ENCODE measurements at regions of chr14 and their contacts with region 1.

Region 1: GRCh38 chr14:54347997-54348611 is 48.7 kb upstream of the CDKN3 start:
- DNase-seq: no peak
- H3K4me3 ChIP-seq: no peak overlapping the region
- CTCF ChIP-seq: peak; percentile 51

Region 2: GRCh38 chr14:53306267-53306721 is 1041.8 kb before region 1 on chr14:
- CTCF ChIA-PET with region 1: interaction called, 43 read pairs
- POLR2A ChIA-PET with region 1: no interaction called
- DNase-seq: no peak
- H3K4me3 ChIP-seq: peak overlapping the region; percentile 51
- CTCF ChIP-seq: peak; percentile 61

Region 3: DNA sequence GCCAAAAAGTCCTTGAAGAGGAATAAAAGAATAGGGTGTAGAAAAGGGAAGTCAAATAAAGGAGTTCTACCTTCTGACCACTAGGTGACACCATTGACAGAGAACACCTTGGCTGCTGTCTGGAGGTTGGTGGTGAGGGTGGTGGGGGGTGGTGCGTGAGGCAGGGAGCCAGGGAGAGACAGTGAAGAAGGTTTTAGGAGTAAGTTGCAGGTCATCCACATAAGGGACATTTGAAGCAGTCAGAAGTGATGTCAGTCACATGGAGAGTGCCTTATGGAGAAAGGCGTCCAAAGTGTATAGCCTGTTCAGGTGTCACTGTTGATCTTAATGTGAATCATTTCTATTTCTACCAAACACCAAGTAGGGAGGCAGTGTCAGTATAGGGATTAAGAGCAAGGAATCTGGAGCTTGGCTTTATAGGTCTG is 915.7 kb before region 1 on chr14:
- CTCF ChIA-PET with region 1: interaction called, 11 read pairs
- POLR2A ChIA-PET with region 1: no interaction called
- DNase-seq: no peak
- H3K4me3 ChIP-seq: no peak overlapping the region
- CTCF ChIP-seq: peak; percentile 74

Region 4: GRCh38 chr14:53539489-53540126 is 808.5 kb before region 1 on chr14:
- CTCF ChIA-PET with region 1: interaction called, 53 read pairs
- POLR2A ChIA-PET with region 1: no interaction called
- DNase-seq: no peak
- H3K4me3 ChIP-seq: no peak overlapping the region
- CTCF ChIP-seq: peak; percentile 82

Region 5: GRCh38 chr14:54175298-54175942 is 172.7 kb before region 1 on chr14:
- CTCF ChIA-PET with region 1: interaction called, 11 read pairs
- POLR2A ChIA-PET with region 1: no interaction called
- DNase-seq: no peak
- H3K4me3 ChIP-seq: no peak overlapping the region
- CTCF ChIP-seq: peak; percentile 61

Region 6: GRCh38 chr14:54220071-54220703 is 127.9 kb before region 1 on chr14:
- CTCF ChIA-PET with region 1: no interaction called
- POLR2A ChIA-PET with region 1: no interaction called
- DNase-seq: no peak
- H3K4me3 ChIP-seq: peak overlapping the region; percentile 39
- CTCF ChIP-seq: no peak

Region 7: DNA sequence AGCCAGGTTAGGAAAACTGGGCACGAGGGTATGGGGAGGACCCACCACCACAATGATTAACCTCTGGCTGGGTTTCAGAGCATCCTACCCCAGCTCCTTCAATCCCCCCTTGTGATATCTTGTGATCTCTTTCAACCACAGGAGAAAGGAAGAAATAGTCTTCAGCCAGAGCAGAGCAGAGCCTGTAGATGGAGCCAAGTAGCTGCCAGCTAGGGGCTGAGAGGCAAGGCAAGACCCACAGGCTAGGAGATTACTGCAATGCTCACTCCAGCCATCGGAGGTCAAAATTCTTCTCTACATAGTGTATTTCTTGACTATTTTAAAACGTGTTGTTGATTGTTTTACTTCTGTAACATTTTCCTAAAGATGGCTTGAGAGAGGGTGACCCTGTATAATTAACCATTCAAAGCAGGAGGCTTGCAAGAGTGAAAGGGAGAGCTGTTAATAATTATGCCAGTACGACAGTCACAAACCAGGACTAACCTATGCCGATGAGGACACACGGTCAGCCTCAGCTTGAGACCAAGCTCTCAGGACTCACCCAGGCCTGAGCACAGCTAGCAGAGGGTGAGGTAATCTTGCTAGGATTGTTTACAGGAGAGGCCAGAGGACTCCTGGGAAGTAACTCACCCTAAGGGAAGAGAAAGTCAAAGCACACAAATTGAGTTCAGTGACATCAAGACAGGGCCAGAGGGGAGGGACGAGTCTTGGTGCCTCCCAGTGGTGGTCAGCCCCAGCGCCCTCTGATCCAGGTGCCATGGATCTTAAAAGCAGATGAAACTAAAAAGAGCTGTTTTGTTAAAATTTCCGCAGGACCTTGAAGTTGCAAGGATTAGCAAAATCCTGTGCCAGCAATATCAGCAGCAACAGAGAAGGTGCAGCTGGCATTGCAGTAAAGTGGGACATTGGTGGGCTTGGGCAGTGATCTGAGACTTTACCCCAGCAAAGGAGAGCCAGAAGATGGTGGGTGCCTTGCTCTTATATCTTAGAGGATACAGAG is 18.9 kb after region 1 on chr14:
- CTCF ChIA-PET with region 1: interaction called, 25 read pairs
- POLR2A ChIA-PET with region 1: no interaction called
- DNase-seq: peak; percentile 38
- H3K4me3 ChIP-seq: no peak overlapping the region; the same call in 1 of the 2 replicates
- CTCF ChIP-seq: peak; percentile 83

Region 8: GRCh38 chr14:54756656-54757392 is 408.7 kb after region 1 on chr14:
- CTCF ChIA-PET with region 1: no interaction called
- POLR2A ChIA-PET with region 1: no interaction called
- DNase-seq: no peak
- H3K4me3 ChIP-seq: no peak overlapping the region
- CTCF ChIP-seq: no peak

Measured in AG04449 (cell line).